ENCODE measurements at regions of chr12 and their contacts with region 1.

Region 1: GRCh38 chr12:10607885-10608458 is 5.4 kb downstream of the MAGOHB start:
- DNase-seq: no peak
- H3K4me3 ChIP-seq: no peak overlapping the region
- H3K27ac ChIP-seq: no peak overlapping the region
- H3K4me1 ChIP-seq: peaks cover 8 to 15% (median 11%) of the 10 kb centered on the region in 4 donors
- H3K27me3 ChIP-seq: no peaks in the 10 kb centered on the region
- CTCF ChIP-seq: peak in 2 of 5 experiments; percentile 21 to 22
- EP300 ChIP-seq: no peak
- POLR2A ChIP-seq: no peak

Region 2: GRCh38 chr12:8709124-8709830 is 1898.7 kb before region 1 on chr12:
- in situ Hi-C with region 1: no loop called
- intact Hi-C with region 1: no loop called
- DNase-seq: peak; percentile 40
- H3K4me3 ChIP-seq: peak overlapping the region in 2 of 4 donors; percentile 3 to 26
- H3K27ac ChIP-seq: peak overlapping the region; percentile 37 to 62 (median 46)
- H3K4me1 ChIP-seq: peaks cover 0 to 19% (median 13%) of the 10 kb centered on the region in 4 donors
- H3K27me3 ChIP-seq: no peaks in the 10 kb centered on the region
- CTCF ChIP-seq: no peak
- EP300 ChIP-seq: no peak
- POLR2A ChIP-seq: no peak

Region 3: GRCh38 chr12:10689146-10689545 is 81.2 kb after region 1 on chr12:
- in situ Hi-C with region 1: loop called in 1 of 4 experiments (anchors 10 kb)
- intact Hi-C with region 1: no loop called
- DNase-seq: no peak
- H3K4me3 ChIP-seq: no peak overlapping the region
- H3K27ac ChIP-seq: no peak overlapping the region
- H3K4me1 ChIP-seq: no peaks in the 10 kb centered on the region
- H3K27me3 ChIP-seq: no peaks in the 10 kb centered on the region
- CTCF ChIP-seq: no peak
- EP300 ChIP-seq: no peak
- POLR2A ChIP-seq: no peak

Region 4: DNA sequence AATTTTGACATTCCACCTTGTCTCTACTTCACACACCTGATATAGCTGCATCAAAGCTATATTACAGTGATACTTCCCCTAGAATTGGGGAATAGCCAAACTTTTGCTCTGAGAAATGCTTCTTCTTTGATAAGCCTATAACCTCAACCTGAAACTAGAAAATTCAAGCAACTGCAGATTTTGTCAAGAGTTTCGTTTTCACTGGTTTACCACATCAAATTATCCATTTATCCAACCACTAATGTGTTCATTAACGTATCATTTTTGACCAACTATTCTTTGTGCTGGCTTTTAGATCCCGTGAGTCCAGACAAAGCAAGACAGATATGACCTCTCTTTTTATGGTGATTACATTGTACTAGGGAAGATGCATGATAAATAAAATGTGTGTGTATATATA is 467.7 kb after region 1 on chr12:
- in situ Hi-C with region 1: no loop called
- intact Hi-C with region 1: no loop called
- DNase-seq: no peak
- H3K4me3 ChIP-seq: no peak overlapping the region
- H3K27ac ChIP-seq: no peak overlapping the region
- H3K4me1 ChIP-seq: peaks cover 0 to 11% (median 4%) of the 10 kb centered on the region in 4 donors
- H3K27me3 ChIP-seq: no peaks in the 10 kb centered on the region
- CTCF ChIP-seq: no peak
- EP300 ChIP-seq: no peak
- POLR2A ChIP-seq: no peak

Measured in transverse colon (tissue), 4 donors.